ENCODE measurements at regions of chr1 and their contacts with region 1.

Region 1: GRCh38 chr1:11838349-11839272 is 9.0 kb downstream of the NPPA start:
- DNase-seq: peak; percentile 78
- ATAC-seq: peak; percentile 46 to 67

Region 2: GRCh38 chr1:11893907-11894251 is 55.3 kb after region 1 on chr1:
- intact Hi-C with region 1: loop called (anchors 1 to 2 kb)
- DNase-seq: no peak
- ATAC-seq: peak; percentile 85 to 89

Region 3: GRCh38 chr1:11967028-11967547 is 128.5 kb after region 1 on chr1:
- intact Hi-C with region 1: loop called in 1 of 2 experiments (anchors 5 kb)
- DNase-seq: no peak
- ATAC-seq: peak; percentile 18 to 72